HepG2 (cell line): ENCODE measurements at regions of chr6 and their contacts with region 1.

Region 1: GRCh38 chr6:17446713-17447112 is 53.3 kb downstream of the CAP2 start:
- DNase-seq: no peak
- ATAC-seq: peak; percentile 75
- H3K4me3 ChIP-seq: no peak overlapping the region
- H3K27ac ChIP-seq: no peak overlapping the region
- H3K4me1 ChIP-seq: no peaks in the 10 kb centered on the region
- H3K27me3 ChIP-seq: no peaks in the 10 kb centered on the region
- CTCF ChIP-seq: peak; percentile 23; the same call in 1 of the 2 replicates
- EP300 ChIP-seq: no peak
- POLR2A ChIP-seq: no peak
- RAD21 ChIP-seq: no peak

Region 2: GRCh38 chr6:17281100-17281494 is 165.6 kb before region 1 on chr6 and contains the start of gene RBM24:
- CTCF ChIA-PET with region 1: no interaction called
- POLR2A ChIA-PET with region 1: no interaction called
- in situ Hi-C with region 1: no loop called
- intact Hi-C with region 1: loop called (anchors 5 kb)
- DNase-seq: peak; percentile 66
- ATAC-seq: peak; percentile 79
- H3K4me3 ChIP-seq: peak within 1 kb of the TSS; percentile 82 to 94 (median 93)
- H3K27ac ChIP-seq: no peak within 1 kb of the TSS
- H3K4me1 ChIP-seq: peaks cover 20% of the 10 kb centered on the region
- H3K27me3 ChIP-seq: peaks cover 0 to 7% of the 10 kb centered on the region in 2 experiments; a peak in 1 of 5 replicates
- CTCF ChIP-seq: peak; percentile 64
- EP300 ChIP-seq: no peak
- POLR2A ChIP-seq: no peak
- RAD21 ChIP-seq: peak; percentile 67
- total RNA-seq, gene RBM24: 1.2 and 1.5 TPM in 2 replicates